ENCODE measurements at regions of chr13 and their contacts with region 1.

Region 1: GRCh38 chr13:44243198-44243857 is 130.3 kb upstream of the SERP2 start:
- DNase-seq: peak; percentile 97
- H3K4me3 Mint-ChIP-seq: no peak overlapping the region
- H3K27ac Mint-ChIP-seq: peak overlapping the region; percentile 81
- H3K4me1 Mint-ChIP-seq: peaks cover 29% of the 10 kb centered on the region
- H3K27me3 Mint-ChIP-seq: no peaks in the 10 kb centered on the region
- CTCF ChIP-seq: peak; percentile 71

Region 2: DNA sequence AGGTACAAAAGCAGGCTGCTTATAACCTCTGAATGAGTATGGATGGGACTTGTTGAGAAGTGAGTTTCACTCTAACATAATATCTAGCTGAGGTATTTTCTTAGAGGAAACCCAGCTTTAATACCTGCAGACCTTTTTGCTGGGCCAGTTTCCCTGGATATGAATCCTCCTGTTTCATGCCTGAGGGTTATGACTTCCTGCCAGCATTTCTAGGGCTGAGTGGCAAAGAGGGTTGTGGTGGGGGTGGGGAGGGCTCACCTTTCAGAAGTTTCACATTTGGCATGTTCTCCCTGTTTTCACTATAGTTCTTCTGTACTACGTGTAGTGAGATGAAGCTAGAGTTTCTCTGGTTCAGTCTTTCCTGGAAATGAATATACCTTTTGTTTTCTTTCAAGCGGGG is 290.0 kb before region 1 on chr13:
- CTCF ChIA-PET with region 1: no interaction called
- POLR2A ChIA-PET with region 1: no interaction called
- intact Hi-C with region 1: no loop called
- DNase-seq: peak; percentile 65
- H3K4me3 Mint-ChIP-seq: no peak overlapping the region
- H3K27ac Mint-ChIP-seq: peak overlapping the region; percentile 6
- H3K4me1 Mint-ChIP-seq: peaks cover 15% of the 10 kb centered on the region
- H3K27me3 Mint-ChIP-seq: no peaks in the 10 kb centered on the region
- CTCF ChIP-seq: no peak

Region 3: GRCh38 chr13:44231786-44232516 is 11.4 kb before region 1 on chr13:
- CTCF ChIA-PET with region 1: interaction called, 10 read pairs
- POLR2A ChIA-PET with region 1: interaction called, 15 read pairs
- intact Hi-C with region 1: no loop called
- DNase-seq: peak; percentile 99
- H3K4me3 Mint-ChIP-seq: peak overlapping the region; percentile 34
- H3K27ac Mint-ChIP-seq: peak overlapping the region; percentile 86
- H3K4me1 Mint-ChIP-seq: peaks cover 28% of the 10 kb centered on the region
- H3K27me3 Mint-ChIP-seq: no peaks in the 10 kb centered on the region
- CTCF ChIP-seq: no peak

Region 4: GRCh38 chr13:44267966-44268365 is 24.6 kb after region 1 on chr13:
- CTCF ChIA-PET with region 1: interaction called, 5 read pairs
- POLR2A ChIA-PET with region 1: interaction called, 14 read pairs
- intact Hi-C with region 1: no loop called
- DNase-seq: peak; percentile 80
- H3K4me3 Mint-ChIP-seq: peak overlapping the region; percentile 50
- H3K27ac Mint-ChIP-seq: peak overlapping the region; percentile 97
- H3K4me1 Mint-ChIP-seq: peaks cover 57% of the 10 kb centered on the region
- H3K27me3 Mint-ChIP-seq: no peaks in the 10 kb centered on the region
- CTCF ChIP-seq: no peak

Region 5: GRCh38 chr13:44280456-44280855 is 37.1 kb after region 1 on chr13:
- CTCF ChIA-PET with region 1: no interaction called
- POLR2A ChIA-PET with region 1: interaction called, 3 read pairs
- intact Hi-C with region 1: loop called (anchors 1 kb)
- DNase-seq: peak; percentile 63
- H3K4me3 Mint-ChIP-seq: no peak overlapping the region
- H3K27ac Mint-ChIP-seq: no peak overlapping the region
- H3K4me1 Mint-ChIP-seq: peaks cover 12% of the 10 kb centered on the region
- H3K27me3 Mint-ChIP-seq: no peaks in the 10 kb centered on the region
- CTCF ChIP-seq: no peak

Region 6: GRCh38 chr13:44300895-44301638 is 57.7 kb after region 1 on chr13:
- CTCF ChIA-PET with region 1: interaction called, 3 read pairs
- POLR2A ChIA-PET with region 1: interaction called, 10 read pairs
- intact Hi-C with region 1: no loop called
- DNase-seq: peak; percentile 98
- H3K4me3 Mint-ChIP-seq: peak overlapping the region; percentile 52
- H3K27ac Mint-ChIP-seq: peak overlapping the region; percentile 88
- H3K4me1 Mint-ChIP-seq: peaks cover 56% of the 10 kb centered on the region
- H3K27me3 Mint-ChIP-seq: no peaks in the 10 kb centered on the region
- CTCF ChIP-seq: peak; percentile 8

Region 7: GRCh38 chr13:44364348-44365049 is 121.2 kb after region 1 on chr13:
- CTCF ChIA-PET with region 1: interaction called, 5 read pairs
- POLR2A ChIA-PET with region 1: no interaction called
- intact Hi-C with region 1: loop called (anchors 5 kb)
- DNase-seq: peak; percentile 69
- H3K4me3 Mint-ChIP-seq: no peak overlapping the region
- H3K27ac Mint-ChIP-seq: no peak overlapping the region
- H3K4me1 Mint-ChIP-seq: peaks cover 20% of the 10 kb centered on the region
- H3K27me3 Mint-ChIP-seq: no peaks in the 10 kb centered on the region
- CTCF ChIP-seq: no peak